ENCODE measurements at regions of chr14 and their contacts with region 1.

Region 1: GRCh38 chr14:50018201-50018932 is 98.0 kb downstream of the VCPKMT start:
- DNase-seq: peak in 1 of 2 donors; percentile 68
- ATAC-seq: peak; percentile 80
- H3K4me3 ChIP-seq: no peak overlapping the region
- H3K27ac ChIP-seq: peak overlapping the region; percentile 68 to 94
- H3K4me1 ChIP-seq: peaks cover 2 to 4% of the 10 kb centered on the region in 2 donors
- H3K27me3 ChIP-seq: no peaks in the 10 kb centered on the region

Region 2: DNA sequence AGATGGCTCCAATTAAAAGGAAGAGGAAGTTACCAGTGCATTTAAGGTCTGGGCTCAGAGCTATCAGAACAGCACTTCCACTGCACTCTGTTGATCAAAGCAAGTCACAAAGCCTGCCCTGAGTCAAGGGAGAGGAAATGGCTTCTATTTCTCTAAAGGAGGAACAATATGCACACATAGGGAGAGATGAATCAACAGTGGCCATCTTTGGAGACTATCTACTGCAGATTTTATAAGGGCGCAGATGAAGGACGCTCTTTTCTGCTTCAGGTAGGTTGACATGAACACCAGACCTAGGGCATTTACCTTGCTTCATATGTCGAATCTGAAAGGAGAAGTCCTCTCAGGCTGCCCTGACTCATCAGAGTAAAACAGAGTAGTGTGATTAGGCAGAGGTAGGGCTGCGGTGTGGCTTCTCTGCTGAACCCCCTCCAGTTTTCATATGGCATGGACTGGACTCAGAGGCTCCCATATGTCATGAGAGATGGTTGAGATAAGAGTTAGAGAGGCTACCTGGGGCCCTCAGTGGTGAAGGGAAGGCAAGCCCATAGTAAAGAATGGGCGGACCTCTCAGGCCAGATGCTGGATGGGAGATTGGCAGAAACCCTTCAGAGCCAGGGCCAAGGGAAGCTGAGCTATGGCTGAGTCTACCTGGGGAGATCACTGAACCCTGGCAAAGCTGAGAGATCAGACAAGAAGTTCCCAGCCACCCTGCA is 41.1 kb before region 1 on chr14:
- intact Hi-C with region 1: loop called in 1 of 2 experiments (anchors 5 kb)
- DNase-seq: no peak
- ATAC-seq: no peak
- H3K4me3 ChIP-seq: no peak overlapping the region
- H3K27ac ChIP-seq: peak overlapping the region; percentile 34 to 43
- H3K4me1 ChIP-seq: peaks cover 0 to 2% of the 10 kb centered on the region in 2 donors
- H3K27me3 ChIP-seq: no peaks in the 10 kb centered on the region

Region 3: GRCh38 chr14:49994821-49995541 is 23.4 kb before region 1 on chr14:
- intact Hi-C with region 1: no loop called
- DNase-seq: no peak
- ATAC-seq: no peak
- H3K4me3 ChIP-seq: no peak overlapping the region
- H3K27ac ChIP-seq: no peak overlapping the region
- H3K4me1 ChIP-seq: peaks cover 0 to 4% of the 10 kb centered on the region in 2 donors
- H3K27me3 ChIP-seq: no peaks in the 10 kb centered on the region

Region 4: GRCh38 chr14:50055461-50056228 is 37.3 kb after region 1 on chr14:
- intact Hi-C with region 1: no loop called
- DNase-seq: peak in 1 of 2 donors; percentile 79
- ATAC-seq: no peak
- H3K4me3 ChIP-seq: no peak overlapping the region
- H3K27ac ChIP-seq: no peak overlapping the region
- H3K4me1 ChIP-seq: peaks cover 6 to 7% of the 10 kb centered on the region in 2 donors
- H3K27me3 ChIP-seq: no peaks in the 10 kb centered on the region

Region 5: DNA sequence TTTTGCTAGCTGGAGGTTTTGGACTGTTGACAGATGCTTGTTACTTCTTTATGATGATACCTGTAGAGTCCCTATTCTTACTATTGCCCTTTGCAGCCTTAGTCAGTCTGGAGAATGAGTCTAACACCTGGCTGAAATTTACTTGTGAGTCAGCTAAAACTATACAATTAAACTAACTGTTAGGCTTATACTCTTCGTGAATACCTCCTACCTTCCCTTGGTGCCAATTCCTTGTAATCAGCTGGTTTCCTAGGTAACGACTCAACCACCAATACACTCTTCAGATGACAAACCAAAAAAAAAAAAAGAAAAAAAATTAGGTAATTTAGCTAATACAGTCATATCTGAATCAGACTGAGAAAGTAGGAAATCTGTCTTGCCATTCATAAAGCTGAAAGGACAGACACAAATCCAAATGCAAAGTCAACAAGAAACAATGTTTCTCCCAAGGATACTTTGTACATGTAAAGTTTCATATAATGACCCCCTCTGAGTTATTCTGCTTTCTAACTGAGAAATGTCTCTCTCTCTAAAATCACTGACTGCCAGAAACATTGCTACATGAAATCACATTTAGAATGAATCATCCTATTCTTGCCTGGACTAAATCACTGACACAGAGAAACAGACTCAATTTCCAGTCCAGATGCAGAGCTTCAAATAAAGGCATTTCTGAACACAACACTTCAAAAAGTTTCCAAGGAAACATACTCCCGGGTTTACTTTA is 434.8 kb after region 1 on chr14:
- intact Hi-C with region 1: no loop called
- DNase-seq: no peak
- ATAC-seq: no peak
- H3K4me3 ChIP-seq: no peak overlapping the region
- H3K27ac ChIP-seq: no peak overlapping the region
- H3K4me1 ChIP-seq: no peaks in the 10 kb centered on the region
- H3K27me3 ChIP-seq: no peaks in the 10 kb centered on the region